Cardiac septum (tissue), 1 donor: ENCODE measurements at regions of chr2 and their contacts with region 1.

Region 1: DNA sequence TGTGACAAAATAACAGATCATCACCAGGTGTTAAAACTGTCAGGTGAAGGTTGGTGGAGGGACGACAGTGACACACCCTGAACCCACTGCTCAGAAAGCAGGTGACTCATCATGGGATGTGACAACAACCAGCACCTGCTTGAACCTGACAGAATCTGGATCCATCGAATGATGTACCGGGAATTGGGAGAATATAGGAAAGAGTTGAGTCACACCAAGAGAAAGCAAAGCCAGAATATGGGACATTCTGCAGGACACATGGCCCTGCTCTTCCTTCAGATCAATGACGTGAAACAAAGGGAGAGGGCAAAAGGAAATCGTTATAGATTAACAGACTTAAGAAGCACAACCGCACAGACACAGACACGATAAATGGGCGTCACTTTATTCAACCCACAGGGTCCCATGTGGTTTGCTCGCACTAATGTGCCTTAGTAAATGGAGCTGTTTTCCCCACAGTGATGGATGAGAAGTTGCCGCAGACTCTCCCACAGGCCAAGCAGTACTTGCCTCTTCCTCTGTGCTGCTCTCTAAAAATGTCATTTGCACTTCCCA is 100.1 kb downstream of the CRACDL start:
- DNase-seq: no peak

Region 2: GRCh38 chr2:98412751-98413458 is 423.0 kb before region 1 on chr2:
- intact Hi-C with region 1: loop called (anchors 10 kb)
- DNase-seq: no peak

Region 3: DNA sequence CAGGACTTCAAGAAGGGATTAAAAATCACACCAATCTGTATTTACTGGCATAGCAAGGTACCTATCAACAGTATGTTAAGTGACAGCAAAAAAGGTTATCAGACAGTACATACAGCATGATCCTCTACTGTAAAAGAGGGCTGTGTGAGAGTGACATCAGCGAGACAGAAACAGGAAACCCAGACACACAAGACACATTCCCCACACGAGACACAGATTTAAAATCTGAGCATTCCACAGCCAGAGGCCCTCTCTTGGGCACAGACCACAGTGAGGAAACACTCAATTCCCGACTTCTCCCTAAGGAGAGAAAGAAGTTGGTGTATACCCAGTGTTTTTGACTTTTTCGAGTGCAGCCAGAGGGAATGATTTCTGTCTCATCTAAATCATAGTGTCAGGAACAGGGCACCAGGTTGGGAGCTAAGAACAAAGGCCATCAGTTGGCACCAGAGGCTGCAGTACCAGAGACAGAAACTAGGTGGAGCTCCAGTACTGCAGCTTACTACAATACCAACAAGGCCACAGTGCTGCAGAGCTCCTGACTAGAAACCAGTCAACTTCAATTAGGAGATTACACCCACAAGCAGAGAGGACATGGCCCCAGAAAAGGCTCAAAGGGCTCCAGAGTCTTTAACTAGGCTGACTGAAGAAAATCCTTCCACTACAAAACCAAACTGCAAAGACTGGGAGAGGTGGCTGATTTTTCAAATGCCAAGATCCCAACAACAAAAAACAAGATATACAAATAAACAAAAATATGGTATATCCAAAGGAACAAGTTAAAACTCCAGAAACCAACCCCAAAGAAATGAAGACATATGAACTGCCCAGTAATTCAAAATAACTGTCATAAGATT is 186.5 kb before region 1 on chr2:
- intact Hi-C with region 1: loop called (anchors 1 kb)
- DNase-seq: no peak

Region 4: DNA sequence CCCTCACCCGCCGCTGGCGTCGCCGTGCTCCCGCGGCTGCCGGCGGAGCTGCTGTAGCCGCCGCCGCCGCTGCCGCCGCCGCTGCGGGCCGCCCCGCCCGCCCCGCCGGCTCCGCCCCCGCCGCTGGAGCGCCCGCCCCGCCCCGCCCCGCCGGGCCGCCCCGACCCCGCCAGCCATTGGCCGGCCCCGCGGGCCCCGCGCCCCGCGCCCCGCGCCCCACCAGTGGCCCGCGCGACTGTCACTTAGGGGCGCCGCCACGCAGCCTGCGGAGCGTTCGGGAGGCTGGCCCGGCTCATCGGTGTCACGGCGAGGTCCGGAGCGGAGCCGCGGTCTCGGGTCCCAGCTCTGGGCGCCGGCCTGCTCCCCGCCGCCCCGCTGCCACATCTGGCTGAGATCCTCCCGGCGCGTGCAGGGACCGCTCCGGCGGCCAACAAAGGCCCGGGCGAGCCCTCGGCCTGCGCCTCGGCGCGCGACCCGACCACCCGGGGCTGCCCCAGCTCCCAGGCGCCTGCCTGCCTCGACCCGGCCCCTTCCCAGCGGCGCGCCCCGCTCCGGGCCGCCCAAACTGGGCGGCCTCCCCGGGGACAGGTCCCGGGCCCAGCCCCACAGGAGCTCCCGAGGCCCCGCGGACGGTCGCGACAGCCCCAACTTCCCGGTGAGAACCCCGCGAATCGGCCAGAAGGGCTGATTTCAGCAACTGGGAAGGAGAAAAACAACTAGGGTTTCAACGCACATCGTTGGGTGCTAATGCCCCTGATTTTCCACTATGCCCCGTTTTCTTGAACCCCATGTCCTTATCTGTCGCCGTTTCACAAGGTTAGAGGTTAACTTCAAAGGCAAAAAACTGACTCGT is 104.6 kb before region 1 on chr2 and contains the start of gene MGAT4A:
- intact Hi-C with region 1: loop called (anchors 2 kb)
- DNase-seq: peak; percentile 90
- total RNA-seq, gene MGAT4A: 16.3 TPM